Panc1 (cell line): ENCODE measurements at regions of chr3 and their contacts with region 1.

Region 1: GRCh38 chr3:9396700-9397521 is 504 bp upstream of the SETD5 start:
- DNase-seq: peak; percentile 93
- ATAC-seq: peak; percentile 87
- H3K4me3 ChIP-seq: peak overlapping the region; percentile 78 to 93
- H3K27ac ChIP-seq: peak overlapping the region; percentile 76
- H3K4me1 ChIP-seq: peaks cover 34% of the 10 kb centered on the region
- H3K27me3 ChIP-seq: no peaks in the 10 kb centered on the region
- CTCF ChIP-seq: no peak

Region 2: GRCh38 chr3:9422712-9423424 is 26.0 kb after region 1 on chr3:
- CTCF ChIA-PET with region 1: interaction called, 7 read pairs
- POLR2A ChIA-PET with region 1: interaction called, 8 read pairs
- in situ Hi-C with region 1: no loop called
- intact Hi-C with region 1: loop called (anchors 2 kb)
- DNase-seq: peak; percentile 85
- ATAC-seq: peak; percentile 96
- H3K4me3 ChIP-seq: peak overlapping the region; percentile 13 to 37
- H3K27ac ChIP-seq: peak overlapping the region; percentile 96
- H3K4me1 ChIP-seq: peaks cover 52% of the 10 kb centered on the region
- H3K27me3 ChIP-seq: no peaks in the 10 kb centered on the region
- CTCF ChIP-seq: peak; percentile 58; the same call in 1 of the 2 replicates